Naive thymus-derived CD4-positive, alpha-beta T cell (primary cell): ENCODE measurements at regions of chr5 and their contacts with region 1.

Region 1: DNA sequence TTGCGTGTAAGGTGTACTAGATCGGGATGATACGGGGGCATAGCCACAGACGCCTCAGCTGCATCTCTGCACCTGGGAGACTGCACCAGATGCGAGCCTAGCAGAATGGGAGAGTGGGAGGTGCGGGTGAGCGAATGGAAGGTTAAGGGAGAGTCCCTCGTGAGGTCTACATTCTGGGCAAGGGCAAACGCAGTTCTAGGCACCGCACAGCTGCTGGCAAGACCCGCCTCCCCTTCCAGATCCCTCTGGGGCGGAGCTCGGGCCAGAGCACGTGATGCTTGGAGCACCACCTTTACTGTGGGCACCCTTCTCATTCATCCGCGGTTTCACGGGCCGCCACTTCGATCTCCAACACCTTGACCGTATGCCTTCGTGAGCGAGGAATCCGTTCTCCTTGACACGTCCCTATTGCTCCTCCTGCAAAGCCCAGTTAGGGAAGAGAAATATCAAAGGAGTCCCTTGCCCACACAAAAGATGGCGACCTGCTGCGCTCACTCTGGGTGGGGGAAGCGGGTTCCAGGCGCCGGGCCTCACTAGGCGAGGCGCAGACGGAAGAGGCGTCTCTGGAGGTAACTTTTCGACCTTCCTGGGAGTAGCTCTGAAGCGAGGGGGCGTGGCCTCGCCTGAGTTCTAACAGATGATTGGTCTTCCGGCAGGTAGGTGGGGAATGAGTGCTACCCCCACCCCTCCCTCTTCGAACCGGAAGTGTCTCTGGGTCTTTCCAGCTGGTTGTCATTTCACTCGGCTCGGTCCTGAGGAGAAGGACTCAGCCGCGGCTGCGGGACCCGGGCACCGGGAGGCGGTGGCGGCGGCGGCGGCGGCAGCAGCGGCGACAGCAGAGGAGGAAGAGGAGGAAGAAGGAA is at the start of gene CPEB4:
- DNase-seq: peak; percentile 89 to 98 (median 97)
- ATAC-seq: peak; percentile 97
- H3K4me3 ChIP-seq: peak within 1 kb of the TSS; percentile 70
- H3K4me3 Mint-ChIP-seq: peak within 1 kb of the TSS; percentile 91 to 99 (median 96)
- H3K27ac ChIP-seq: peak within 1 kb of the TSS; percentile 82
- H3K27ac Mint-ChIP-seq: peak within 1 kb of the TSS; percentile 94 to 100 (median 98)
- H3K4me1 ChIP-seq: peaks cover 49 to 60% of the 10 kb centered on the region in 2 donors
- H3K4me1 Mint-ChIP-seq: peaks cover 61 to 88% (median 78%) of the 10 kb centered on the region in 7 donors
- H3K27me3 ChIP-seq: no peaks in the 10 kb centered on the region
- H3K27me3 Mint-ChIP-seq: no peaks in the 10 kb centered on the region
- total RNA-seq, gene CPEB4: 12.6 to 40.4 (median 17.5) TPM

Region 2: DNA sequence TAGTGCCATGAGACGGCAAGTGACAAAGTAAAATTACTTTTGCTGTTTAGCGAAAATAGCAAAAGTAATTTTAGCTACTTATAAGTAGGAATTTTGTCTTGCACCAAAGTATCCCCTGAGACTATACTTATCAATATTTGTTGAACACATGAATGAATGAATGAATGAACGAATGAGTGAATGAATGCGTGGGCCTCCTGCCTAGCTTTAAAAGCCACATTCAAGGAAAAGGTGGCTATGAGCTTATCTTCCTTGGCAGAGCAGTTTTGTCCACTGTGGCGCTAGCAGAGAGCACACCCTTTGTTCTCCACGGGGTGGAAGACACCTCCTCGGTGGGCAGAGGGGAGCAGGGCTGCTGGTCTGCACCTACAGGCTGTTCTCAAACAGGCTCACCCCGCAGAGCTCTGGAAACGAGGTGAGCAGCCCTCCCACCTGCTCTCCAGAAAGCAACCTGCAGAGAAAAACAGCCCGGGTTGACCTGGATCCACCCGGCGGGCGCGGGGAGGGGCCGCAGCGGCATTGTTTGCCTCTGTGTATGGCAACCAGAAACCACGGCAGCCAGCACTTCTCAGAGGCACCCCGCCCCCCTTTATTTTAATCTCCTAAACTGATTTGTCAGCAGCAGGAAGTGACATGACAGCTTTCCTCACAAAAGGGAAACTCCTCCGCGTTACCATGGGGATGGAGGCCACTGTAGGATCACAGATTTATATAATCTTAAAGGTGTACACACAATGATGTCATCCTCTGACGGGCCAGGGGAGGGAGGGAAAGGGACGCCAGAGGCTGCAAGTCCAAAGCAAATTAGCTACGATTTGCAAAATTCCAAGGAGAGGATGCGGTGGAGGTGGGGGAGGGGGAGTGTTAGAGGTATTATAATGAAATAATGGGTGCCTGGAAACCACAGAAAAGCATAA is 1122.7 kb before region 1 on chr5:
- CTCF ChIA-PET with region 1: no interaction called
- POLR2A ChIA-PET with region 1: interaction called, 4 read pairs
- intact Hi-C with region 1: loop called (anchors 5 to 10 kb)
- DNase-seq: peak; percentile 86 to 100 (median 99)
- ATAC-seq: peak; percentile 73
- H3K4me3 ChIP-seq: peak overlapping the region; percentile 64
- H3K4me3 Mint-ChIP-seq: peak overlapping the region; percentile 80 to 93 (median 84)
- H3K27ac ChIP-seq: peak overlapping the region; percentile 93
- H3K27ac Mint-ChIP-seq: peak overlapping the region; percentile 94 to 100 (median 97)
- H3K4me1 ChIP-seq: peaks cover 25 to 31% of the 10 kb centered on the region in 2 donors
- H3K4me1 Mint-ChIP-seq: peaks cover 8 to 62% (median 52%) of the 10 kb centered on the region in 7 donors
- H3K27me3 ChIP-seq: no peaks in the 10 kb centered on the region
- H3K27me3 Mint-ChIP-seq: peaks cover 0 to 8% (median 0%) of the 10 kb centered on the region in 5 donors

Region 3: GRCh38 chr5:173144200-173145176 is 743.4 kb before region 1 on chr5 and contains the start of gene BNIP1:
- CTCF ChIA-PET with region 1: no interaction called
- POLR2A ChIA-PET with region 1: no interaction called
- intact Hi-C with region 1: loop called in 1 of 2 experiments (anchors 1 kb)
- DNase-seq: peak; percentile 92 to 99 (median 96)
- ATAC-seq: peak; percentile 94
- H3K4me3 ChIP-seq: peak within 1 kb of the TSS; percentile 100
- H3K4me3 Mint-ChIP-seq: peak within 1 kb of the TSS; percentile 93 to 99 (median 97)
- H3K27ac ChIP-seq: peak within 1 kb of the TSS; percentile 98
- H3K27ac Mint-ChIP-seq: peak within 1 kb of the TSS; percentile 96 to 99 (median 98)
- H3K4me1 ChIP-seq: no peaks in the 10 kb centered on the region
- H3K4me1 Mint-ChIP-seq: peaks cover 5 to 21% (median 16%) of the 10 kb centered on the region in 7 donors
- H3K27me3 ChIP-seq: no peaks in the 10 kb centered on the region
- H3K27me3 Mint-ChIP-seq: no peaks in the 10 kb centered on the region
- total RNA-seq, gene BNIP1: 5.5 to 23.2 (median 15.3) TPM

Region 4: GRCh38 chr5:173823711-173824528 is 63.9 kb before region 1 on chr5:
- CTCF ChIA-PET with region 1: no interaction called
- POLR2A ChIA-PET with region 1: no interaction called
- intact Hi-C with region 1: loop called in 1 of 2 experiments (anchors 2 kb)
- DNase-seq: no peak
- ATAC-seq: no peak
- H3K4me3 ChIP-seq: no peak overlapping the region
- H3K4me3 Mint-ChIP-seq: no peak overlapping the region
- H3K27ac ChIP-seq: no peak overlapping the region
- H3K27ac Mint-ChIP-seq: no peak overlapping the region
- H3K4me1 ChIP-seq: no peaks in the 10 kb centered on the region
- H3K4me1 Mint-ChIP-seq: peaks cover 0 to 22% (median 6%) of the 10 kb centered on the region in 7 donors
- H3K27me3 ChIP-seq: no peaks in the 10 kb centered on the region
- H3K27me3 Mint-ChIP-seq: peaks cover 0 to 4% (median 0%) of the 10 kb centered on the region in 5 donors

Region 5: DNA sequence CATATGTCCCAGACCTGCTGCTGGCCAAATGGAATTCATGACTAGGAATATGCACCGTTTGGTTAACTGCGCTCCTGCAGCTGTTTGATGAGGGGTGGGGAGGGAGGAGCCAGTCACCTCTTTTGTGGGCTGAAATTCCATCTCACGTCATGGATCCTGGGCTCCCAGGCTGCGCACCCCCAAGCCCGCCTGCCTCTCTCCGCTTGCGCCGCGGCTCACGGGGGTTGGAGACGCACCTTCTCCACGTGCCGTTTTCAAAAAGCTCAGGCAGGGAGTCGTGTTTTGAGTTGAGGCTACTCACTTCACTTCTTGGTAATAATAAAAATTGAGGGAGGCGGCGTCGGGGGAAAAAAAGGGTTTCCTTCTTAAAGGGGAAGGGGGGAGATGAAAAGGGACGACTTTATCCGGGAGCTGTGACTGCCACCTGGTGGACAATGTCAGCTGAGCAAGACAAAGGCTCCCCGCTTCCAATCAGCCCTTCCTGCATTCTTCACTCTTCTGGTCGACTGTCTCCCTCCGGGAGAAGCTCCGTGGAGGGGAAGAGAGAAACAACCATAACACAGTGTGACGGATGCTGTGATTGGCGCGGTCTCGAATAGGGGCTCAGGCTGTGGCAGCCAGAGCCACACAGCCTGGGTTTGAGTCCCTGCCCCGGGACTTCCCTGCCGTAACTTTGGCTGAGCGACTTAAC is 85.2 kb after region 1 on chr5:
- CTCF ChIA-PET with region 1: interaction called, 3 read pairs
- POLR2A ChIA-PET with region 1: no interaction called
- intact Hi-C with region 1: loop called in 1 of 2 experiments (anchors 1 kb)
- DNase-seq: peak; percentile 51 to 76 (median 71)
- ATAC-seq: peak; percentile 91
- H3K4me3 ChIP-seq: peak overlapping the region; percentile 38
- H3K4me3 Mint-ChIP-seq: peak overlapping the region; percentile 70 to 89 (median 84)
- H3K27ac ChIP-seq: no peak overlapping the region
- H3K27ac Mint-ChIP-seq: peak overlapping the region in 5 of 9 donors; percentile 33 to 60 (median 50)
- H3K4me1 ChIP-seq: peaks cover 4 to 6% of the 10 kb centered on the region in 2 donors
- H3K4me1 Mint-ChIP-seq: peaks cover 0 to 13% (median 10%) of the 10 kb centered on the region in 7 donors
- H3K27me3 ChIP-seq: no peaks in the 10 kb centered on the region
- H3K27me3 Mint-ChIP-seq: peaks cover 5 to 33% (median 8%) of the 10 kb centered on the region in 5 donors